Caco-2 (cell line): ENCODE measurements at regions of chr4 and their contacts with region 1.

Region 1: DNA sequence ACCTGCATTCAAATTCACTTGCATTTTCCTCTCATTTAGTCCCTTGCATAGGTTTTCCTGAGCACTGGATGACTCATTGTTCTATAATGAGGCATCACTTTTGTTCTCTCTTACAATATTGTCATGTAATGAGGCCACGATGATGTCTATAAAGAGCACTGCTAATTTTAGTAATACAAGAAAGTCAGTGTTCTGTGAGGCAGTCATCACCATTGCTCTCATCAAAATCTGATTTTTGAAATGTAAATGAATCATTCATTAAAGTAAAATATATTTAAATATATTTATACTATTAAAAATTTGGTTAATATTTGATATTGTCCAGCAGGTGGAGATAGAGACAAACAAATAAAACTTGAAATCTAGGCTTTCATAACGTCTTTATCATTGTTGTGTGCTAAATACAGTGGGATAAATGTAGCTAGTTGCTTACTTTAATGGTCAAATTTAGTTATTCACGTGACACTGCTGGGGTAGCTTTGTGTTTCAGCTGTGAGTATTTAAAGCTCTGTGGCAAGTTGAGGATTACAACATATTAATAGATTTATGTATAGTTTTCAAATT is 15.4 kb downstream of the HMGB2 start:
- DNase-seq: no peak
- H3K4me3 ChIP-seq: no peak overlapping the region
- H3K4me3 Mint-ChIP-seq: no peak overlapping the region
- H3K27ac Mint-ChIP-seq: no peak overlapping the region
- H3K4me1 ChIP-seq: no peaks in the 10 kb centered on the region
- H3K4me1 Mint-ChIP-seq: peaks cover 7% of the 10 kb centered on the region
- H3K27me3 ChIP-seq: no peaks in the 10 kb centered on the region
- H3K27me3 Mint-ChIP-seq: no peaks in the 10 kb centered on the region
- CTCF ChIP-seq: peak; percentile 12 to 39

Region 2: DNA sequence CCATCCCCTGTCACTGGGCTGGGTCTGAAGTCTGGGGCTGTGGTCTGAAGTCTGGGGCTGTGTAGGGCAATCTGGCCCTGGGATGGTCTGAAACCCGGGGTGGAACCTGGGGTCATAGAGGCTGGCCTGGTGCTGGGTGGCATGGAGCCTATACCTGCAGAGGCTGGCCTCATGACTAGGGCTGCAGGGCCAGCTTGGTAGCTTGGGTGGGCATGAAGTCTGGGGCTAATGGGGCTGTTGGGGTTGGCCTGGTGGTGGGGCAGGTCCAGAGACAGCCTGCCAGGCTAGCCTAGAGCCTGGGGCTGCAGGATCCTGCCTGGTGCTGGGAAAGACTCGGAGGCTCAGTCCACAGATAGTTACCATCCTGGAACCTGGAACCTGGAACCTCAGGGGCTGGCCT is 113.1 kb before region 1 on chr4:
- CTCF ChIA-PET with region 1: no interaction called
- POLR2A ChIA-PET with region 1: no interaction called
- intact Hi-C with region 1: no loop called
- DNase-seq: no peak
- H3K4me3 ChIP-seq: no peak overlapping the region
- H3K4me3 Mint-ChIP-seq: no peak overlapping the region
- H3K27ac Mint-ChIP-seq: no peak overlapping the region
- H3K4me1 ChIP-seq: no peaks in the 10 kb centered on the region; the same call in 1 of the 2 replicates
- H3K4me1 Mint-ChIP-seq: peaks cover 9% of the 10 kb centered on the region
- H3K27me3 ChIP-seq: no peaks in the 10 kb centered on the region
- H3K27me3 Mint-ChIP-seq: no peaks in the 10 kb centered on the region
- CTCF ChIP-seq: no peak

Region 3: DNA sequence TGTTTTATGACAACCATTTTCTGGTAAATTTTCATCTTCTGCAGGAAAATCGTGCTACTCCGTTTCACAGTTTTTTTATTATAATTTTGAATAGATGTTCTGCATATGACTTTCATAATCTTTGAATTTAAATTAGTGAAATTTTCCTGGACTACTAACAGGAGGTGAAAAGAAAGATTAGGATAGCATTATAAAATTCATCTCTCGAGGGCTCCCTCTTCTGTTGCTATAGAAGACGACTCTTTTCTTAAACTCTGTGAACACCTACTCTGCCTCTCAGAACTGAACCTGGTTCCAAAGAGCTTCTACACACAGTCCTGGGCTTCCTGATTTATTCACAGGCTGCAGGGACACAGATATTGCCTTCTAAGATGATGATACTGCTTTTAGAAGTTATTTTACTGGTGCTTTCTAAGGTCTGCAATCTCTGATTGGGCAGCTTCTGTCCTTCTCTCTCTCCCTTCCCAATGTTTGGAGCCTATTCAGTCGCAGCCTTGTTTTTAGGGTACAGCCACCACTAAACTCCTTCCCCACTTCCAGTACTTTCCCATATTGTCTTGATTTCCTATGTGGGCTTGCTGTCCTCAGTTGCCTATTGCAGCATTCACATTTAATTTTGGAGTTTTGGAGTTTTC is 42.0 kb after region 1 on chr4:
- CTCF ChIA-PET with region 1: interaction called, 4 read pairs
- POLR2A ChIA-PET with region 1: no interaction called
- intact Hi-C with region 1: loop called (anchors 2 kb)
- DNase-seq: no peak
- H3K4me3 ChIP-seq: no peak overlapping the region
- H3K4me3 Mint-ChIP-seq: no peak overlapping the region
- H3K27ac Mint-ChIP-seq: no peak overlapping the region
- H3K4me1 ChIP-seq: no peaks in the 10 kb centered on the region
- H3K4me1 Mint-ChIP-seq: no peaks in the 10 kb centered on the region
- H3K27me3 ChIP-seq: no peaks in the 10 kb centered on the region
- H3K27me3 Mint-ChIP-seq: peaks cover 4% of the 10 kb centered on the region
- CTCF ChIP-seq: peak; percentile 18 to 35

Region 4: GRCh38 chr4:173494013-173494970 is 175.6 kb after region 1 on chr4:
- CTCF ChIA-PET with region 1: interaction called, 3 read pairs
- POLR2A ChIA-PET with region 1: no interaction called
- intact Hi-C with region 1: loop called (anchors 10 kb)
- DNase-seq: peak; percentile 68
- H3K4me3 ChIP-seq: peak overlapping the region; percentile 33
- H3K4me3 Mint-ChIP-seq: peak overlapping the region; percentile 69
- H3K27ac Mint-ChIP-seq: no peak overlapping the region
- H3K4me1 ChIP-seq: peaks cover 9% of the 10 kb centered on the region; the same call in 1 of the 2 replicates
- H3K4me1 Mint-ChIP-seq: peaks cover 8% of the 10 kb centered on the region
- H3K27me3 ChIP-seq: no peaks in the 10 kb centered on the region; the same call in 1 of the 2 replicates
- H3K27me3 Mint-ChIP-seq: no peaks in the 10 kb centered on the region
- CTCF ChIP-seq: peak; percentile 65 to 89